ENCODE measurements at regions of chr12 and their contacts with region 1.

Region 1: DNA sequence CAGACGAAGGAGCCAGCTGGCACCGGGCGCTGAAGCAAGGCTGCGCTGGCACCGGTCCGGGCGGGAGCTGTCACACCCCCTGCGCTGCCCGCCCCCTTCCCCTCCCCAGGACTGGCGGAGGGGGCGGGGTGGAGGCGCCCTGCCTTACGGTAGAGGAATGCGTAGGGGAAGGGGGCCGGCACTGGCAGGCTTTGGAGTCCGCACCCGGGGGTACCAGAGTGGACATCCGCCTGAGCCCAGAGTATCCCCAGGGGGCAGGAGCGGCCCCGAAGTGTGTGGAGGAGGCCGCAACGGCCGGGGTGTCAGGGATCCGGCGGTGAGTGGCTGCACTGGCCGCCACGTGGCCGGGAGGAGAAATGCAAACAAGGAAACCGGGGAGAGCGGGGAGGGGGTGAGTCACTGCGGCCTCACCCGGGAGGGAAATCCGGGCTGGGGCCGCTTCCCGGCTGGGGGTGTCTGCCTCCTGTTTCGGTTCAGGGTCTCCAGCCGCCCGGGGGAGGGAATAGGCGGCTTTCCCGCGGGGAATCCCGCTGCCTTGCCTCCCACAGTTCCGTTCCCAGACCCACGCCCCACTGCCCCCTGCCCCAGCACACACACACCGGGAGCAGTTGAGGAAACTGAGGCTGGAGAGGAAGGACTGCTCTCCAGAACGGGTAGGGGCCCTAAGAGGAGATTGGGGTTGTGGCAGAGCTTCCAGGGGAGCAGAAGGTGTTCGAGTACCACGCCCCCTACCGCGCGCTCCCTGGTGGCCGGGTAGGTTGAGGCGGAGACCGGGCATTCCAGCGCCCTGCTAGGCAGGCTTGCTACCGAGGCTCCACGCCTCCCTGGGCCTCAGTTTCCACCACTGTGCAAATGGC is at the start of gene RAPGEF3:
- DNase-seq: peak; percentile 81 to 86
- H3K4me3 ChIP-seq: peak within 1 kb of the TSS; percentile 75
- H3K27ac ChIP-seq: peak within 1 kb of the TSS; percentile 66
- H3K4me1 ChIP-seq: peaks cover 68% of the 10 kb centered on the region
- H3K27me3 ChIP-seq: no peaks in the 10 kb centered on the region
- CTCF ChIP-seq: peak; percentile 59
- total RNA-seq, gene RAPGEF3: 4.1 and 5.7 TPM in 2 replicates

Region 2: DNA sequence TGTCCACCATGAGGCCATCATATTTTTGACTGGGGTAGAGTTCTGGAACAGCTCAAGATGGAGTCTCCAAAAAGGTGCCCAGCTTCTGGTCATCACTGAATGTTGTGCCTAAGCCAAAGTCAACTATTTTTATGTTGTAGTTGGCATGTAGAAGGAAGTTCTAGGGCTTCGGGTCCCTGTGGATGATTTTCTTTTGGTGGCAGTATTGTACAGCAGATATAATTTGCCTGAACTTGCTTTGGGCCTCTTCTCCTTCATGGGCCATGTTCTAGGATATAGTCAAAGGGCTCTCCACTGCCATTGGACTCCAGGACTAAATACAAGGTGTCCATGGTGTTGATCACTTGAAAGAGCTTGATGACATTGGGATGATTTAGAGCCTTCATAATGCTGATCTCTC is 1076.9 kb before region 1 on chr12:
- CTCF ChIA-PET with region 1: no interaction called
- POLR2A ChIA-PET with region 1: interaction called, 19 read pairs
- intact Hi-C with region 1: no loop called
- DNase-seq: no peak
- H3K4me3 ChIP-seq: no peak overlapping the region
- H3K27ac ChIP-seq: no peak overlapping the region
- H3K4me1 ChIP-seq: peaks cover 7% of the 10 kb centered on the region; the same call in 1 of the 2 replicates
- H3K27me3 ChIP-seq: no peaks in the 10 kb centered on the region
- CTCF ChIP-seq: no peak

Region 3: GRCh38 chr12:47825239-47825639 is 66.2 kb after region 1 on chr12:
- CTCF ChIA-PET with region 1: no interaction called
- POLR2A ChIA-PET with region 1: no interaction called
- intact Hi-C with region 1: loop called (anchors 2 kb)
- DNase-seq: peak; percentile 80 to 88
- H3K4me3 ChIP-seq: no peak overlapping the region
- H3K27ac ChIP-seq: peak overlapping the region; percentile 71
- H3K4me1 ChIP-seq: peaks cover 95% of the 10 kb centered on the region
- H3K27me3 ChIP-seq: no peaks in the 10 kb centered on the region
- CTCF ChIP-seq: no peak

Region 4: GRCh38 chr12:47858511-47859266 is 99.6 kb after region 1 on chr12:
- CTCF ChIA-PET with region 1: no interaction called
- POLR2A ChIA-PET with region 1: no interaction called
- intact Hi-C with region 1: no loop called
- DNase-seq: peak; percentile 54 to 55
- H3K4me3 ChIP-seq: no peak overlapping the region
- H3K27ac ChIP-seq: no peak overlapping the region
- H3K4me1 ChIP-seq: peaks cover 11% of the 10 kb centered on the region
- H3K27me3 ChIP-seq: no peaks in the 10 kb centered on the region
- CTCF ChIP-seq: no peak